Left ventricle myocardium superior (tissue), 1 donor: ENCODE measurements at regions of chr6 and their contacts with region 1.

Region 1: DNA sequence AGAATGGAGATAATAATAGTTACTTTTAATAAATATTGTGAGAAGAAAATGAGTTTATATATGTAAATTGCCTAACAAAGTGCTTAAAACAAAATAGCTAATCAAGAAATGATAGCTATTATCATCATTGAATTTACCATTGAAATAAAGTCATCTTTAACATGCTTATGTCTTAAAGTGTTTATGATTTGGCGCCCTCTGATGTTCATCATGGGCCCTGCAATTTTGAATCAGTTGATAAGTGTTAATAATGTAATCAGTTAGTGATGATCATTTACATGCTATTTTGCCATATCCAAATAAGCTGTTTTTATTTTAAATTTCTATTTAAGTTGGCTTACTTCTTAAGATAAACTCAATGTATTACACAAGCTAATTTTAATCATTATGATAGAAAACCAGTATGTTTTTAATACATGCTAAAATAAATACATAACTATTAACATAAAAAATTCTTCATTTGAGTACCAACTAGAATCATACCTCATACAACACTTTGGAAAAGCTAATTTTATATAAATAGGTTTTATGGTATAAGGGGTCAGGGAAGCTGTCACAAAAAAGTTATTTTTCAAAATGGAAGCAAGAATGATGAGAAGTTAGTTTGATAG is 39.2 kb upstream of the TPD52L1 start:
- DNase-seq: peak; percentile 34
- ATAC-seq: no peak

Region 2: GRCh38 chr6:124870611-124871459 is 243.5 kb before region 1 on chr6:
- intact Hi-C with region 1: loop called (anchors 1 kb)
- DNase-seq: no peak
- ATAC-seq: no peak

Region 3: GRCh38 chr6:124964764-124965105 is 149.6 kb before region 1 on chr6:
- intact Hi-C with region 1: loop called (anchors 5 kb)
- DNase-seq: no peak
- ATAC-seq: no peak

Region 4: DNA sequence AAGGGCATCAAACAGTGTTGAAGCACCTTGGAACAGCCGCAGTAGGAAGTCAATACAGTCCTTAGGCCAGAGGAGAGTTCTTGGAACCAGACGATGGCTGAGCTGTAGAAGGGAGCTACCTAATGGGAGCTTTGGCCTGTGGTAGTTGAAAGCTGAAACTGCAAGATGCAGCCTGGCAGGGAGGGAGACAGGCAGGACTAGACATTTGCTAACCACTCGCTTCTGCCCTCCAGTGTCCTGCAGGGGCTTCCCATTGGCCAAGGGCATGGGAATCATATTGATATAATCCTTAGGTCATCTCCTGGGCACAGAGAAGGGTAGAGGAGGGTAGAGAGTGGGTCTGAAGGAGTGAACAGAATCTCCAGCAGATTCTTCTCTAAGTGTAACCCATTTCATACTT is 99.6 kb after region 1 on chr6:
- intact Hi-C with region 1: no loop called
- DNase-seq: no peak
- ATAC-seq: no peak